Activated CD4-positive, alpha-beta T cell treated with anti-CD3 and anti-CD28 coated beads for 36 hours (primary cell): ENCODE measurements at regions of chr11 and their contacts with region 1.

Region 1: GRCh38 chr11:102268329-102269193 is 48.7 kb upstream of the BIRC3 start:
- DNase-seq: peak; percentile 93
- ATAC-seq: peak; percentile 98
- H3K4me3 Mint-ChIP-seq: peak overlapping the region; percentile 66
- H3K27ac Mint-ChIP-seq: peak overlapping the region; percentile 5
- H3K4me1 Mint-ChIP-seq: peaks cover 37% of the 10 kb centered on the region
- H3K27me3 Mint-ChIP-seq: peaks cover 5% of the 10 kb centered on the region

Region 2: GRCh38 chr11:102109896-102110760 is 158.4 kb before region 1 on chr11 and contains the start of gene YAP1:
- CTCF ChIA-PET with region 1: no interaction called
- POLR2A ChIA-PET with region 1: no interaction called
- intact Hi-C with region 1: loop called in 1 of 2 experiments (anchors 1 kb)
- DNase-seq: peak; percentile 81
- ATAC-seq: peak; percentile 76
- H3K4me3 Mint-ChIP-seq: peak within 1 kb of the TSS; percentile 89
- H3K27ac Mint-ChIP-seq: no peak within 1 kb of the TSS
- H3K4me1 Mint-ChIP-seq: peaks cover 13% of the 10 kb centered on the region
- H3K27me3 Mint-ChIP-seq: peaks cover 43% of the 10 kb centered on the region
- total RNA-seq, gene YAP1: 0.21 to 0.25 TPM

Region 3: GRCh38 chr11:102254045-102254444 is 14.5 kb before region 1 on chr11:
- CTCF ChIA-PET with region 1: interaction called, 18 read pairs
- POLR2A ChIA-PET with region 1: no interaction called
- intact Hi-C with region 1: no loop called
- DNase-seq: no peak
- ATAC-seq: no peak
- H3K4me3 Mint-ChIP-seq: no peak overlapping the region
- H3K27ac Mint-ChIP-seq: no peak overlapping the region
- H3K4me1 Mint-ChIP-seq: no peaks in the 10 kb centered on the region
- H3K27me3 Mint-ChIP-seq: no peaks in the 10 kb centered on the region

Region 4: GRCh38 chr11:102279641-102280170 is 11.1 kb after region 1 on chr11:
- CTCF ChIA-PET with region 1: interaction called, 10 read pairs
- POLR2A ChIA-PET with region 1: no interaction called
- intact Hi-C with region 1: no loop called
- DNase-seq: peak; percentile 59
- ATAC-seq: peak; percentile 96
- H3K4me3 Mint-ChIP-seq: peak overlapping the region; percentile 27
- H3K27ac Mint-ChIP-seq: peak overlapping the region; percentile 27
- H3K4me1 Mint-ChIP-seq: peaks cover 16% of the 10 kb centered on the region
- H3K27me3 Mint-ChIP-seq: peaks cover 8% of the 10 kb centered on the region

Region 5: GRCh38 chr11:102317099-102317767 is 48.7 kb after region 1 on chr11 and contains the start of gene BIRC3:
- CTCF ChIA-PET with region 1: interaction called, 7 read pairs
- POLR2A ChIA-PET with region 1: no interaction called
- intact Hi-C with region 1: loop called in 1 of 2 experiments (anchors 1 kb)
- DNase-seq: peak; percentile 95
- ATAC-seq: peak; percentile 85
- H3K4me3 Mint-ChIP-seq: peak within 1 kb of the TSS; percentile 96
- H3K27ac Mint-ChIP-seq: peak within 1 kb of the TSS; percentile 99
- H3K4me1 Mint-ChIP-seq: peaks cover 68% of the 10 kb centered on the region
- H3K27me3 Mint-ChIP-seq: no peaks in the 10 kb centered on the region
- total RNA-seq, gene BIRC3: 99.2 to 109 TPM